ENCODE measurements at regions of chr2 and their contacts with region 1.

Region 1: DNA sequence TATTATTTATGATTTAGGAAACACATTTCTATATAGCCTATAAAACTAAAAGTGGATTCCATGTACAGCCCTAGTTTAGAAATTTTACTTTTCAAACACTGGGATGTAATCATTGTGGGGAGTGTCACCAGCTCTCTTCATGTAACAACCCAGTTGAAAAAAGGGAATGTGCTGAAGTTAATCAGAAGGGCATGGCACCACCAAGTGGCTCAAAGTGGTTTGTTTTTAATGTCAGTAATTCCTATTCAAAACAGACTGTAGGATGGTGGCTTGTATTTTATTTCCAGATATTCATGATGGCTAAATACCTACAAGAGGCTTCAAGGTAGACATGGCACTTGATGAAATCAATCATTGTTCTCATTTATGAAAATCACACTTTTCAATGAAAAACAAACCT is 58.1 kb upstream of the TMEM182 start:
- DNase-seq: peak; percentile 33
- ATAC-seq: peak; percentile 88
- H3K4me3 ChIP-seq: no peak overlapping the region
- H3K27ac ChIP-seq: no peak overlapping the region
- H3K4me1 ChIP-seq: peaks cover 14% of the 10 kb centered on the region
- H3K27me3 ChIP-seq: no peaks in the 10 kb centered on the region
- CTCF ChIP-seq: peak; percentile 71
- EP300 ChIP-seq: no peak
- POLR2A ChIP-seq: no peak
- RAD21 ChIP-seq: 0 out of 2 replicates have a peak, but pooled peaks have one; percentile 52

Region 2: DNA sequence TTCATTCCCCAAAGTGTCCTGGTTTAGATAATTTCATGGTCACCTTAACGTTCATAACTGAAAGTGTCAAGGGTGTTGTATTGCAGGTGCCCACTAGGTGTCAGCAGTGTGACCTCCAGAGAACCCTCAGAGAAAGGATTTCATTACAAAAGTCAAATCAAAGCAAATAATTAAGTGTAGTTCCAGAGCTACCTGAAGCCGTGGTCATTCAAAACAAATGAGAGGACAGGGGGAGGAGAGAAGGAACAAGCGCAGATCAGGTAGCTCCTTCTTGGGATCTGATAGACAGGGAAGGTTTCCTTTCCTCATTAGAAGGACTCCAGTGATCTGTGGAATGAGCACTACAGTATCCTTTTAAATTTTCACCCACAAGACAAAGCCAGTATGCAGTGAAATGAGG is 230.7 kb before region 1 on chr2 and contains the start of gene SLC9A4:
- CTCF ChIA-PET with region 1: interaction called, 7 read pairs
- POLR2A ChIA-PET with region 1: no interaction called
- in situ Hi-C with region 1: no loop called
- intact Hi-C with region 1: loop called (anchors 1 kb)
- DNase-seq: peak; percentile 52
- ATAC-seq: peak; percentile 77
- H3K4me3 ChIP-seq: no peak within 1 kb of the TSS
- H3K27ac ChIP-seq: no peak within 1 kb of the TSS
- H3K4me1 ChIP-seq: no peaks in the 10 kb centered on the region
- H3K27me3 ChIP-seq: no peaks in the 10 kb centered on the region; a peak in 1 of 5 replicates
- CTCF ChIP-seq: peak; percentile 83
- EP300 ChIP-seq: no peak
- POLR2A ChIP-seq: no peak
- RAD21 ChIP-seq: no peak
- total RNA-seq, gene SLC9A4: not detected in 2 replicates

Region 3: DNA sequence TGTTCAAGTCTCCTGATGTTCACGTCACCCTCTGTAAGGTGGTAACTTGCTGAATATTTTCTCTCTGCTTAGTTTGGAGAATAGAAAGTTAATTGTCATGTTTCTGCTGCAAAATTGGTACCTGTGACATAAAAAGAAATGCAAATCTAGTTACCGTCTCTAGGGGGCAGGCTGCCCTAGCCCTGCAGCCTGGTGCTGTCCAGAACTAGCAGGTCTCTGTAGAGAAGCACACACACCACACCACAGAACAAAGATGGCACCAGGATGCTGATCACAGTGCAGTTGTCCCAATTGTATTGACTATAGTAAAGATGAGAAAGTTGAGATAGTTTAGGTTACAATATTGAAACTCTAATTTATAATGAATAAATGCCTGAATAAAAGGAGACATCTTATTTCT is 183.7 kb before region 1 on chr2:
- CTCF ChIA-PET with region 1: no interaction called
- POLR2A ChIA-PET with region 1: no interaction called
- in situ Hi-C with region 1: no loop called
- intact Hi-C with region 1: loop called (anchors 1 kb)
- DNase-seq: peak; percentile 56
- ATAC-seq: peak; percentile 92
- H3K4me3 ChIP-seq: no peak overlapping the region
- H3K27ac ChIP-seq: no peak overlapping the region
- H3K4me1 ChIP-seq: peaks cover 16% of the 10 kb centered on the region
- H3K27me3 ChIP-seq: no peaks in the 10 kb centered on the region; a peak in 1 of 5 replicates
- CTCF ChIP-seq: peak; percentile 84
- EP300 ChIP-seq: no peak
- POLR2A ChIP-seq: no peak
- RAD21 ChIP-seq: peak; percentile 63

Region 4: GRCh38 chr2:102686479-102687439 is 17.0 kb before region 1 on chr2:
- CTCF ChIA-PET with region 1: no interaction called
- POLR2A ChIA-PET with region 1: no interaction called
- in situ Hi-C with region 1: no loop called
- intact Hi-C with region 1: no loop called
- DNase-seq: no peak
- ATAC-seq: no peak
- H3K4me3 ChIP-seq: no peak overlapping the region
- H3K27ac ChIP-seq: no peak overlapping the region
- H3K4me1 ChIP-seq: no peaks in the 10 kb centered on the region
- H3K27me3 ChIP-seq: peaks cover 0 to 8% of the 10 kb centered on the region in 2 experiments; a peak in 2 of 5 replicates
- CTCF ChIP-seq: no peak
- EP300 ChIP-seq: no peak
- POLR2A ChIP-seq: no peak
- RAD21 ChIP-seq: no peak

Measured in HepG2 (cell line).